AG04449 (cell line): ENCODE measurements at regions of chr10 and their contacts with region 1.

Region 1: GRCh38 chr10:111281516-111281915 is 204.7 kb downstream of the ADRA2A start:
- DNase-seq: no peak
- H3K4me3 ChIP-seq: no peak overlapping the region
- CTCF ChIP-seq: peak; percentile 26

Region 2: DNA sequence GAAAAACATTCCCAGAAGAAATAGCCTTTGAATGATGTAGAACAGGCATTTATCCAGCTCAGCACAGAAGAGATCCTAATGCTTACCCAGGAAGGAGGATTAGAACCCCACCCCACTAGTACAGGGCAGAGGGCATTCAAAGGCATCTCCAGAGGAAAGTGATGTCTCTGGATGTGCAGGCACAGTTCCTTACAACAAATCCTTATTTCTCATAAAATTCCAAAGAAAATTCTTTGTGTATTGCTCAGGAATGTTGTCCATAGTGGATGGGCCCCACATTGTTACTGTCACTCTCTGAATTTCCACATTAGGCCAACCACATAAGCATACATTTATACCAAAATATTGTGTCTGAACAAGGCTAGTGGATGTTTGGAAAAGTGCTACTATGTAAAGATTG is 38.4 kb after region 1 on chr10:
- CTCF ChIA-PET with region 1: interaction called, 15 read pairs
- POLR2A ChIA-PET with region 1: no interaction called
- DNase-seq: no peak
- H3K4me3 ChIP-seq: no peak overlapping the region
- CTCF ChIP-seq: no peak